K562 (cell line): ENCODE measurements at regions of chr15 and their contacts with region 1.

Region 1: GRCh38 chr15:78872972-78873792 is 492 bp downstream of the MORF4L1 start:
- DNase-seq: peak; percentile 67 to 96 (median 76)
- ATAC-seq: peak; percentile 87
- H3K4me3 ChIP-seq: peak overlapping the region; percentile 99
- H3K27ac ChIP-seq: peak overlapping the region; percentile 100
- H3K4me1 ChIP-seq: peaks cover 15 to 18% of the 10 kb centered on the region in 2 experiments
- H3K27me3 ChIP-seq: no peaks in the 10 kb centered on the region
- CTCF ChIP-seq: peak; percentile 69 to 79 (median 71)
- EP300 ChIP-seq: peak; percentile 16; the same call in 1 of the 2 replicates
- POLR2A ChIP-seq: peak; percentile 90
- RAD21 ChIP-seq: no peak

Region 2: GRCh38 chr15:78859971-78860732 is 13.0 kb before region 1 on chr15:
- CTCF ChIA-PET with region 1: interaction called, 6 read pairs
- POLR2A ChIA-PET with region 1: interaction called, 12 read pairs
- in situ Hi-C with region 1: no loop called
- intact Hi-C with region 1: no loop called
- DNase-seq: peak; percentile 70 to 87 (median 72)
- ATAC-seq: peak; percentile 92
- H3K4me3 ChIP-seq: peak overlapping the region; percentile 54
- H3K27ac ChIP-seq: peak overlapping the region; percentile 66; the same call in 2 of the 3 replicates
- H3K4me1 ChIP-seq: peaks cover 0 to 4% of the 10 kb centered on the region in 2 experiments; a peak in 1 of 5 replicates
- H3K27me3 ChIP-seq: no peaks in the 10 kb centered on the region
- CTCF ChIP-seq: peak; percentile 36 to 63 (median 60); a peak in 5 of 6 replicates
- EP300 ChIP-seq: peak; percentile 58; the same call in 1 of the 2 replicates
- POLR2A ChIP-seq: no peak
- RAD21 ChIP-seq: peak in 1 of 2 experiments; percentile 21; a peak in 1 of 4 replicates

Region 3: GRCh38 chr15:79943820-79944219 is 1070.6 kb after region 1 on chr15:
- CTCF ChIA-PET with region 1: no interaction called
- POLR2A ChIA-PET with region 1: no interaction called
- in situ Hi-C with region 1: no loop called
- intact Hi-C with region 1: no loop called
- DNase-seq: no peak
- ATAC-seq: no peak
- H3K4me3 ChIP-seq: no peak overlapping the region
- H3K27ac ChIP-seq: no peak overlapping the region
- H3K4me1 ChIP-seq: peaks cover 0 to 13% of the 10 kb centered on the region in 2 experiments; a peak in 3 of 5 replicates
- H3K27me3 ChIP-seq: no peaks in the 10 kb centered on the region; a peak in 1 of 5 replicates
- CTCF ChIP-seq: no peak
- EP300 ChIP-seq: no peak
- POLR2A ChIP-seq: no peak
- RAD21 ChIP-seq: no peak